Calu3 (cell line): ENCODE measurements at regions of chr6 and their contacts with region 1.

Region 1: GRCh38 chr6:57021086-57021720 is 25.3 kb upstream of the KIAA1586 start:
- DNase-seq: no peak
- H3K4me3 Mint-ChIP-seq: no peak overlapping the region
- H3K27ac Mint-ChIP-seq: no peak overlapping the region
- H3K4me1 Mint-ChIP-seq: no peaks in the 10 kb centered on the region
- H3K27me3 Mint-ChIP-seq: no peaks in the 10 kb centered on the region
- CTCF ChIP-seq: peak; percentile 47

Region 2: DNA sequence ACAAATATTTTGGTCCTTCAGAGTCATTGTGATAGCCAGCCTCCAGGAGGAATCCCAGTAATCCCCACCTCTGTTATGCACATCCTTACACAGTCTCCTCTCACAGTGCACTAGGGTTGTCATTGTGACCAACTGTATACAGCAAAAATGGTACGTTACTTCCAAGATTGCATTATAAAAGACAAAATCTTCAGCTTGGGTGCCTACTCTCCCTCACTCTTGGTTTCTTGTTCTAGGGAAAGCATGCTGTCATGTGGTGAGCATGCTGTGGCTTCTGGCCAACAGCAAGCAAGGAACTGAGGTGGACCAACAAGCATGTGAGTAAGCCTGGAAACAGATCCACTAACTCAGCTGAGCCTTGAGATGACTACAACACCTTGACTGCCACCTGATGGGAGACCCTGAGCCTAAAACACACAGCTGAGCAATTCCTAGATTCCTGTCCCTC is 248.4 kb before region 1 on chr6:
- CTCF ChIA-PET with region 1: no interaction called
- intact Hi-C with region 1: no loop called
- DNase-seq: peak; percentile 45
- H3K4me3 Mint-ChIP-seq: no peak overlapping the region
- H3K27ac Mint-ChIP-seq: peak overlapping the region; percentile 30
- H3K4me1 Mint-ChIP-seq: peaks cover 28% of the 10 kb centered on the region
- H3K27me3 Mint-ChIP-seq: no peaks in the 10 kb centered on the region
- CTCF ChIP-seq: no peak

Region 3: GRCh38 chr6:56902641-56903464 is 118.3 kb before region 1 on chr6:
- CTCF ChIA-PET with region 1: interaction called, 10 read pairs
- intact Hi-C with region 1: loop called (anchors 1 kb)
- DNase-seq: no peak
- H3K4me3 Mint-ChIP-seq: no peak overlapping the region
- H3K27ac Mint-ChIP-seq: no peak overlapping the region
- H3K4me1 Mint-ChIP-seq: peaks cover 27% of the 10 kb centered on the region
- H3K27me3 Mint-ChIP-seq: no peaks in the 10 kb centered on the region
- CTCF ChIP-seq: peak; percentile 51

Region 4: GRCh38 chr6:56914798-56915658 is 106.2 kb before region 1 on chr6:
- CTCF ChIA-PET with region 1: no interaction called
- intact Hi-C with region 1: no loop called
- DNase-seq: no peak
- H3K4me3 Mint-ChIP-seq: no peak overlapping the region
- H3K27ac Mint-ChIP-seq: no peak overlapping the region
- H3K4me1 Mint-ChIP-seq: peaks cover 9% of the 10 kb centered on the region
- H3K27me3 Mint-ChIP-seq: no peaks in the 10 kb centered on the region
- CTCF ChIP-seq: no peak

Region 5: DNA sequence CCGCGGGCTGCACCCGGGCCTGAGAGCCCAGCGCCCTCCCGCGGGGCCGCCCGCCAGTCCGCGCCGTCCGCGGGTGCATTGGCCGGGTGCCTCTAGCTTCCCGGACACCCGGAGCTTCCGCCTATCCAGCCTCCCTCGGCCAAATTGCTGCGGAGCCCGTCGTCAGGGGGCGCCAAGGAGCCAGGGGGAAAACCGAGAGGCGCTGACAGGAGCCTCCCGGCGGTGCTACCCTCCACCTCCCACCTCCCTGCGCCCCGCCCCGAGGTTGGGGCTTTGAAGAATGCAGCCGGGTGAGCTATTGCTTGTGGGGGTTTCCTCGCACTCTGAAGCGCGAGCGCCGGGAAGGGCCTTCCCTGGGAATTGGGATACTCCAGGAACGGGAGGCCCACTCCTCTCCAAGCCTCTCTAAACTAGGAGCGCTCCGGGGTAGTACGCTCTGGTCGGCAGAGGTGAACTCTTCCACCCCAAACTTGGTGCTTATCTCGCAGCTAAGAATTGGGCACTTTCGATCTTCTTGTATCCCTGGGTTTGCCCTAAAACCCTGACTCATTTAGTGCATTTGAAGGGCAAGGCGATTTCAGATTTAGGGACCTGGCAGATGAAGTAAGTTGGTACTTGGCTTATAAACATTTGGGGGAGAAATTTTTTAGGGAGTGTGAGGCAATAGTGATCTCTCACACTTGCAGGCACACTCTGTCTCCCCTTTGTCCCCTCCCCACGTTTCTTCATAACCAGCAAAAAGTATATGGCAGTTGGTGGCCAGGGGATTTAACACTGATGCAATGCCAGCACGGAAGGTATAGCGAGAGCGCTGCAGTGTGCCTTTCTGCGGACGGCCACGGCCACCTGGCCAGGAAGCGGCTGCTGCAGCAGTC is 65.8 kb before region 1 on chr6:
- CTCF ChIA-PET with region 1: interaction called, 4 read pairs
- intact Hi-C with region 1: loop called (anchors 1 kb)
- DNase-seq: peak; percentile 97
- H3K4me3 Mint-ChIP-seq: peak overlapping the region; percentile 90
- H3K27ac Mint-ChIP-seq: peak overlapping the region; percentile 66
- H3K4me1 Mint-ChIP-seq: no peaks in the 10 kb centered on the region
- H3K27me3 Mint-ChIP-seq: no peaks in the 10 kb centered on the region
- CTCF ChIP-seq: peak; percentile 92